ENCODE measurements at regions of chr7 and their contacts with region 1.

Region 1: GRCh38 chr7:26143298-26144048 is 8.5 kb upstream of the NFE2L3 start:
- H3K4me3 Mint-ChIP-seq: no peak overlapping the region
- H3K27ac Mint-ChIP-seq: no peak overlapping the region
- H3K4me1 Mint-ChIP-seq: peaks cover 50% of the 10 kb centered on the region
- H3K27me3 Mint-ChIP-seq: peaks cover 16% of the 10 kb centered on the region

Region 2: DNA sequence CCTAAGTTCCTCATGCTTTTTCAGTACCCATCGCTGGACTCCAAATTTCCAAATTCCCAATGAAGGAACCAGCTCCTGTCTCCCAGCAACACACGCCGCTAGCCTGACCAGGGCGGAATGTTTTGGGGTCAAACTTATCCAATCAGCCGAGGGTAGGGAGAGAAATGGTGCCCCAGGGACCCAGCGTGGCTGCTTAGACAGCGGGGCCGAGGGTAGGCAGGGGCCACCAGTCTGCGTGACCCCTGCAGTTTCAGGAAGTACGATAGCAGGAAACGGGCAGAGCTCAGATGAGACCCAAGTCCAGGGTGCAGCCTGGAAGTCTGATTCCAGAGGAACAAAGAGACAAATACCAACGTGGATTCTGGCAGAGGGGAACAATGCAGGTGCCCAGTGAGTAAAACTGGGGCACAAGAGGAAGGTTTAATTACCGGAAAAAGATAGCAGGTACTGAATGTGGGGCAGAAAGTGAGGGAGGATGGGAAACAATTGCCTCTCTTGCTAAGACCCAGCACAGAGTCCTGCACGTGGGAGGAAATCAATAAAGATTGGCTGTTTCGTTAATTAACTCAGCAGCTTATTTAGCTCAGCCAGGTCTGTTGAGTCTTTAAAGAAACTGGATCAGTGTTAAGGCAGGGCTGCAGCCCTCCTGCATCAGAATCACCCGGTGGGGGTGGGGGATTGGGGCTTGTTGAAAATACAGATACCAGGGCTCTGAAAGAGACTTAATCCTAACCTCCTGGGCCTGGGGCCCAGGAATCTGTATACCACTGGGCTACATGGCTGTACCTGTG is 41.9 kb before region 1 on chr7:
- intact Hi-C with region 1: loop called (anchors 5 kb)
- H3K4me3 Mint-ChIP-seq: peak overlapping the region; percentile 85
- H3K27ac Mint-ChIP-seq: peak overlapping the region; percentile 98
- H3K4me1 Mint-ChIP-seq: peaks cover 65% of the 10 kb centered on the region
- H3K27me3 Mint-ChIP-seq: no peaks in the 10 kb centered on the region

Region 3: DNA sequence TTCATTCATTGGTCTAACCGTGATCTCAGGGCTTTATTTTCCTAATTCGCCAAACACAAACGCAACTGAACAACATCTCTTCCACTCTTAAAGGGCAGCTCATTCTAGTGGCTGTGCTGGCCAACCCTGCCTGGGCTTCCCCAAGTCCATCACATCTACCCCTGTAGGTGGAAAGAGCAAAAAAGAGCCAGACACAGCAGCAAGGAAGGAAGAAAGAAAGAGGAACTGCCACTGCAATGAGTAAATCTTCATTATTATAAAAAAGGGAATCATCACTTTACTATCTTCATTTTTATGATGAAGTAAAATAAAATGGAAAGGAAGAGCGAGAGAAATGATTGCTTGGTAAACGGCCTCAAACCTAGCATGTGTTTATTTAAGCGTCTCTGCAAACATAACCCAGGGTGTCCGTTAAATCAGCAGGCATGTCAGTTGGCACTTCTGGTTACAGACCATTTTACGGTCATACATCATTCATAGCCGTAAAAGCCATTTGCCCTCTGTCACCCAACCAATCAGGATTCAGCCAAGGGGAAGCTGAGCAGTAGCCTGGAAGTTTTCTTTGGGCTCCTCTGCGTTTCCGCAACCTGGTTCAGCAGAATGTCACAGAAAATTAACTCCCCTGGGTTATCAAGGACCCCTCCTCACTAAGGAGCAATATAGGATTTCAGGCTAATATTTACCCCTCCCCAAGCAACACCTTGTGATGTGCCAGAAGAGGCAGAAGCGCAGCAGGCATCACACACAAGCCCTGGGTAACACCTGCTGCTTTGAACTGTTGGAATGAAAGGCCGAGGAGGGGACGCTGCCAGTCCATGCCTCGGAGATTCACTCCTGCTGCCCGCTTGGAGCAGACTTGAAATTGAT is 382.2 kb after region 1 on chr7:
- intact Hi-C with region 1: no loop called
- H3K4me3 Mint-ChIP-seq: no peak overlapping the region
- H3K27ac Mint-ChIP-seq: no peak overlapping the region
- H3K4me1 Mint-ChIP-seq: peaks cover 12% of the 10 kb centered on the region
- H3K27me3 Mint-ChIP-seq: peaks cover 6% of the 10 kb centered on the region